ENCODE measurements at regions of chr3 and their contacts with region 1.

Region 1: GRCh38 chr3:49021813-49022687 is at the start of gene NDUFAF3:
- DNase-seq: peak; percentile 82 to 98
- H3K4me3 ChIP-seq: peak within 1 kb of the TSS; percentile 84 to 97 (median 95)
- H3K27ac ChIP-seq: peak within 1 kb of the TSS; percentile 91
- H3K4me1 ChIP-seq: peaks cover 0 to 21% (median 13%) of the 10 kb centered on the region in 4 experiments; a peak in 6 of 7 replicates
- H3K27me3 ChIP-seq: no peaks in the 10 kb centered on the region; a peak in 1 of 7 replicates
- CTCF ChIP-seq: peak in 2 of 3 experiments; percentile 87 to 96; a peak in 3 of 4 replicates
- EP300 ChIP-seq: no peak; a peak in 1 of 3 replicates
- POLR2A ChIP-seq: peak in 1 of 2 experiments; percentile 88; a peak in 2 of 3 replicates
- RAD21 ChIP-seq: peak; percentile 25 to 41; a peak in 3 of 4 replicates
- total RNA-seq, gene NDUFAF3: 26.2 and 27.8 TPM in 2 replicates

Region 2: DNA sequence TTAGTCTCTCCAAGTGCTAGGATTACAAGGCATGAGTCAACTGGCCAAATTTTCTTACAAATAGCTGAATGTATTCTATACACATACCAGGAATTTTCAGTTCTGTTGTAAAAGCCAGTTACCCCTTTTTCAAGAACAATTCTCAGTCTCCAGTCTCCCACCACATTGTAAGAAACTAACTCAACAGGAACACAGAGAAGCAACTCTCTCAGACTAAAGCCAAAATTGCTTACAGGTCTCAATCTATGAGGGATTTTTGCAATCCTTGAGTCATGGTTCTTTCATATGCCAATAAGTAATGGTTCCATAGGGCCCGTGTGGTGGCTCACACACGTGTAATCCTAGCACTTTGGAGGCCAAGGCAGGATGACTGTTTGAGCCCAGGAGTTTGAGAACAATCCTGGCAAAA is 313.6 kb before region 1 on chr3:
- CTCF ChIA-PET with region 1: no interaction called
- POLR2A ChIA-PET with region 1: no interaction called
- DNase-seq: no peak
- H3K4me3 ChIP-seq: no peak overlapping the region
- H3K27ac ChIP-seq: no peak overlapping the region; the same call in 1 of the 2 replicates
- H3K4me1 ChIP-seq: peaks cover 0 to 3% (median 3%) of the 10 kb centered on the region in 4 experiments; a peak in 2 of 7 replicates
- H3K27me3 ChIP-seq: no peaks in the 10 kb centered on the region
- CTCF ChIP-seq: no peak
- EP300 ChIP-seq: no peak
- POLR2A ChIP-seq: no peak
- RAD21 ChIP-seq: no peak

Region 3: DNA sequence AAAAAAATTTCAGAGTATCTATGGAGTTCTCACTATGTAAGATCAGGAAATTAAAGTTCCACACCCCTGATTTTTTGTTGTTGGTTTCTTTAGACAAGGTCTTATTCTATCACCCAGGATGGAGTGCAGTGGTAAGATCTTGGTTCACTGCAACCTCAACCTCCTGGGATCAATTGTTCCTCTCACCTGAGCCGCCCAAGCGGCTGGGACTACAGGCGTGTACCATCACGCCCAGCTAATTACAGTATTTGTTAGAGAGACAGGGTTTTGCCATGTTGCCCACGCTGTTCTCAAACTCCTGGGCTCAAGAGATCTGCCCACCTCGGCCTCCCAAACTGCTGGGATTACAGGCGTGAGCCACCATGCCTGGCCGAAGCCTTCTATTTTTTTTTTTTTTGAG is 59.4 kb after region 1 on chr3:
- CTCF ChIA-PET with region 1: interaction called, 11 read pairs
- POLR2A ChIA-PET with region 1: interaction called, 6 read pairs
- DNase-seq: no peak
- H3K4me3 ChIP-seq: no peak overlapping the region
- H3K27ac ChIP-seq: no peak overlapping the region
- H3K4me1 ChIP-seq: no peaks in the 10 kb centered on the region
- H3K27me3 ChIP-seq: no peaks in the 10 kb centered on the region
- CTCF ChIP-seq: no peak
- EP300 ChIP-seq: no peak
- POLR2A ChIP-seq: no peak
- RAD21 ChIP-seq: no peak

Region 4: GRCh38 chr3:49104483-49105291 is 82.6 kb after region 1 on chr3 and contains the start of gene QARS1:
- CTCF ChIA-PET with region 1: interaction called, 4 read pairs
- POLR2A ChIA-PET with region 1: interaction called, 141 read pairs
- DNase-seq: peak; percentile 81 to 96
- H3K4me3 ChIP-seq: peak within 1 kb of the TSS; percentile 82 to 87 (median 84)
- H3K27ac ChIP-seq: peak within 1 kb of the TSS; percentile 96
- H3K4me1 ChIP-seq: peaks cover 0 to 9% (median 3%) of the 10 kb centered on the region in 4 experiments; a peak in 5 of 7 replicates
- H3K27me3 ChIP-seq: no peaks in the 10 kb centered on the region
- CTCF ChIP-seq: no peak
- EP300 ChIP-seq: peak in 1 of 2 experiments; percentile 44; a peak in 1 of 3 replicates
- POLR2A ChIP-seq: peak; percentile 74 to 91
- RAD21 ChIP-seq: no peak
- total RNA-seq, gene QARS1: 346 and 353 TPM in 2 replicates

Region 5: DNA sequence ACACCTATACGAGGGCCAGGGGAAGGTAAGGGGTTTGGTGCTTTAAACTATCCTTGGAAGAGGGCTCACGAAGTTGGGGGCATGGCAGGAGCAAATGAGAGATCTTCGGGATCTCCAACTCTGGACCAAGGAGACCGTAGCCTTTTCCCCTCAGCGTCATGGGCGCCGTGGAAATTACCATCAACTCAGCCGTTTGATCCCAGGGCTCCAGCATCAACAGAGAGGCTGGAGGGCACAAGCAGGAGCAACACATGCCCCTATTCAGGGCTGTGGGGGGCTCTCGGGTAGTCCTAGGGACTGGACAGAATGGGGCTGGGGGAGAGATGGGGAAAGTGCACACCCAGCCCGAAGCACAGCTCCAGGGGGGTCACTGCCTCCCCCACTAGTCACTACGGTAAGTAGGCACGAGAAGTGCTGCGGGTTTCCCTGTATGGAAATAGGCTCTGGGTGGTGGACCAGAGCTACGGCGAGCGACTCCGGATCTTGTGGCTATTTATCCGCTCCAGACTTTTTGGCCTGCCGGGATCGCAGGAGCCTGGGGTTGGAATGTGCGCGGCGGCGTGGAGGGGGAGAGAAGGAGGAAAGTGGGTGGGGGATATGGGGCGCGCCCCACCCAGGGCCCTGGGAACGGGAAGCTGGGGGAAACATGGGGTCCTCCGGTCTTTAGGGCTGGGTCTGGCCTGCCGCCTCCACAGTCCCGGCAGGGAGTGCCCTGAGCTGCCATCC is 111.3 kb after region 1 on chr3:
- CTCF ChIA-PET with region 1: no interaction called
- POLR2A ChIA-PET with region 1: interaction called, 14 read pairs
- DNase-seq: peak in 1 of 2 experiments; percentile 85
- H3K4me3 ChIP-seq: peak overlapping the region; percentile 62 to 92 (median 81)
- H3K27ac ChIP-seq: peak overlapping the region; percentile 43; the same call in 1 of the 2 replicates
- H3K4me1 ChIP-seq: peaks cover 0 to 8% (median 7%) of the 10 kb centered on the region in 4 experiments; a peak in 6 of 7 replicates
- H3K27me3 ChIP-seq: no peaks in the 10 kb centered on the region; a peak in 2 of 7 replicates
- CTCF ChIP-seq: no peak
- EP300 ChIP-seq: peak in 1 of 2 experiments; percentile 8; a peak in 1 of 3 replicates
- POLR2A ChIP-seq: no peak; a peak in 1 of 3 replicates
- RAD21 ChIP-seq: no peak

Region 6: GRCh38 chr3:49786241-49786958 is 764.4 kb after region 1 on chr3 and contains the start of gene IP6K1:
- CTCF ChIA-PET with region 1: no interaction called
- POLR2A ChIA-PET with region 1: no interaction called
- DNase-seq: peak; percentile 99
- H3K4me3 ChIP-seq: peak within 1 kb of the TSS; percentile 75 to 95 (median 86)
- H3K27ac ChIP-seq: peak within 1 kb of the TSS; percentile 74
- H3K4me1 ChIP-seq: peaks cover 0 to 5% (median 2%) of the 10 kb centered on the region in 4 experiments; a peak in 2 of 7 replicates
- H3K27me3 ChIP-seq: peaks cover 0 to 2% (median 0%) of the 10 kb centered on the region in 4 experiments; a peak in 2 of 7 replicates
- CTCF ChIP-seq: no peak
- EP300 ChIP-seq: no peak
- POLR2A ChIP-seq: peak in 1 of 2 experiments; percentile 67; a peak in 2 of 3 replicates
- RAD21 ChIP-seq: no peak
- total RNA-seq, gene IP6K1: 35.2 and 36.3 TPM in 2 replicates

Measured in H1 (cell line).